Brain microvascular endothelial cell (primary cell): ENCODE measurements at regions of chr5 and their contacts with region 1.

Region 1: DNA sequence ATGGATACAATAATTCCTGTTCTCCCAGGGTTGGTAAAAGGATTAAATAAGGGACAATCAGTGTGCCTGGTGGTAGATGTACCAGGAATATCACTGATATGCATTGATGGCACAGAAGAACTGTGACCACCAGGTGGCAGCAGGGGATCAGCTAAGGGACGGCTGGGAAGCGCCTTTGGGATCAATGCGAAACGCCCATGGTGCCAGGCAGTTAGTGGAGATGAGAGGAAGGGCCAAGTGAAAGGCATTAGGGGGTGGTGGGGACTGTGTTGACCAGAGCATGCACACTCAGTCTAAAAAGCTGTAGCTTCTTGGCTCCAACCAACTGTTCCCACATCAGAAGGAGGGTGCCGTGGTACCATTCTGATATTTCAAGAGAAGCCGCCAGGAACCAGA is 55.6 kb downstream of the ARHGEF37 start:
- DNase-seq: peak; percentile 66
- H3K4me3 ChIP-seq: no peak overlapping the region
- H3K27ac ChIP-seq: no peak overlapping the region
- H3K27me3 ChIP-seq: no peaks in the 10 kb centered on the region
- CTCF ChIP-seq: peak; percentile 89

Region 2: GRCh38 chr5:149828161-149828884 is 191.5 kb after region 1 on chr5:
- in situ Hi-C with region 1: loop called (anchors 25 kb)
- DNase-seq: peak; percentile 94
- H3K4me3 ChIP-seq: no peak overlapping the region
- H3K27ac ChIP-seq: no peak overlapping the region
- H3K27me3 ChIP-seq: no peaks in the 10 kb centered on the region
- CTCF ChIP-seq: peak; percentile 91

Region 3: DNA sequence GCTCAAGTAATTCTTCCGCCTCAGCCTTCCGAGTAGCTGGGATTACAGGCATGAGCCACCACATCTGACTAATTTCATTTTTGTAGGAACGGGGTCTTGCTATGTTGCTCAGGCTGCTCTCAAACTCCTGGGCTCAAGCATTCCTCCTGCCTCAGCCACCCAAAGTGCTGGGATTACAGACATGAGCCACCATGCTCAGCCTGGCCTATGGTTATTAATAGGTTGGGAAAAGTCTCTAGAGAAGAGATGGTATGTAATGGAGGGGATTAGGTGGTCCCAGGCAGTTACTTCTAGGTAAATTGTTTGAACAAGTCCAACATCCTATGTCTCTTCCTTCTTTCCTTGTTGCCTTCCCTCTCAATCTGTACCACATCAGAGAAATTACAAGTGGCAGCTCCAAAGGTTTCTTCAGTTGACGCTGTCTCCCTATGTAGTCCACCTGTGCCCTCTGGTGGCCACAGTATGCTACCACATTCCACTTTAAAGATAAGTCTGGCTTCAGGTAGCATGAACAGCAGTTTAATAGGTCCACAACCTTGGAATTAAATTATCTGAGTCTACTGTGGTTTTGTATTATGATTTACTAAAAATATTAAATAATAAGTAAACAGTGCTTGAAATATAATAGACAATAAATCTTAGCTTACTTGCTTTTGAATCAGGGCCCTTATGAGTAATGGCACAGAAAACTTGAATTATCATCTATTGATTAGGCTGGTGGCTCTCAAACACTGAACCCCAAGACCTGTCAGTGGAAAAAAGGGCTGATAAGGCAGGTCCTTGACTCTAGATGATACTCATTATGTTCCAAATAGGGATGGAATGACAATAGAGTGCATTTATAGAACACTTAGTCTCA is 353.9 kb after region 1 on chr5:
- in situ Hi-C with region 1: loop called (anchors 25 kb)
- DNase-seq: peak; percentile 70
- H3K4me3 ChIP-seq: no peak overlapping the region
- H3K27ac ChIP-seq: no peak overlapping the region
- H3K27me3 ChIP-seq: no peaks in the 10 kb centered on the region
- CTCF ChIP-seq: peak; percentile 93